MCF 10A (cell line): ENCODE measurements at regions of chr13 and their contacts with region 1.

Region 1: DNA sequence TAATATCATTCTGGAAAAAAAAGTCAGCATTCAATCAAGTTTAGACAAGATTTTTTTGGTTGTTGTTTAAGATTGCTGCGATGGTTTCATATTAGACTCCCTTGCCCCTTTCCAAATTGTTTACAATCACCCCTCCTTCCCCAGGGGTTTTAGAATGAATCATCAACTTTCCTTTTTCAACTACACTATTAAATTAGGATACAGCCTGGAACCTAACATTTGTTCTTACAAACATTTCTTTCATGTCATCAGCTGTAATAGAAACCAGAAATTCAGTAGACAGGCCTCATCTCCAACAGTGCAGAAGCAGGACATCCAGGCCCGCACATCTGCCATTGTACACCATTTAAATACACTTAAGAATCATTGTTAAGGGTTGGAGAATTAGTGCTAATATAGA is 44.4 kb upstream of the WDFY2 start:
- DNase-seq: no peak
- H3K4me3 Mint-ChIP-seq: no peak overlapping the region
- H3K27ac Mint-ChIP-seq: peak overlapping the region; percentile 65
- H3K4me1 Mint-ChIP-seq: peaks cover 21% of the 10 kb centered on the region
- H3K27me3 Mint-ChIP-seq: no peaks in the 10 kb centered on the region
- CTCF ChIP-seq: no peak

Region 2: DNA sequence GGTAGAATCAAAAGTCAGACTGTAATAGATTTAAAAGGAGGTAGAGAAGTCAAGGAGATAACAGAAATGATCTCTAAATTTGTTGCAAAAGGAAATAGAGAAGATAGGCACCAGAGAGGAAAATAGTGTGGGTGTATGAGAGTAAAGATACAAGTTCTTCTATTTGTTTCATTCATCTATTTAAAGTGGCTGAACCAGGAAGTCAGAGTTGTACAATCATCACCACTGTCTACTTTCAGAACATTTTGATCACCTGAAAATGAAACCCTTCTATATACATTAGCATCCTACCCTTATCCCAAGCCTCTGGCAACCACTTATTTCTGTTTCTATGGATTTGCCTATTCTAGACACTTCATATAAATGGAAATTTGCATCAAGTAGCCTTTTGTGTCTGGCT is 123.8 kb before region 1 on chr13:
- CTCF ChIA-PET with region 1: no interaction called
- POLR2A ChIA-PET with region 1: no interaction called
- intact Hi-C with region 1: no loop called
- DNase-seq: no peak
- H3K4me3 Mint-ChIP-seq: no peak overlapping the region
- H3K27ac Mint-ChIP-seq: peak overlapping the region; percentile 64
- H3K4me1 Mint-ChIP-seq: peaks cover 19% of the 10 kb centered on the region
- H3K27me3 Mint-ChIP-seq: no peaks in the 10 kb centered on the region
- CTCF ChIP-seq: no peak

Region 3: GRCh38 chr13:51552027-51552426 is 12.1 kb after region 1 on chr13:
- CTCF ChIA-PET with region 1: interaction called, 3 read pairs
- POLR2A ChIA-PET with region 1: interaction called, 21 read pairs
- intact Hi-C with region 1: no loop called
- DNase-seq: no peak
- H3K4me3 Mint-ChIP-seq: no peak overlapping the region
- H3K27ac Mint-ChIP-seq: no peak overlapping the region
- H3K4me1 Mint-ChIP-seq: peaks cover 35% of the 10 kb centered on the region
- H3K27me3 Mint-ChIP-seq: no peaks in the 10 kb centered on the region
- CTCF ChIP-seq: no peak